ENCODE measurements at regions of chr19 and their contacts with region 1.

Region 1: GRCh38 chr19:4400135-4400936 is at the start of gene SH3GL1:
- DNase-seq: peak; percentile 87 to 98 (median 96)
- H3K4me3 ChIP-seq: peak within 1 kb of the TSS; percentile 78 to 94 (median 85)
- H3K27ac ChIP-seq: peak within 1 kb of the TSS; percentile 64 to 99 (median 89)
- H3K4me1 ChIP-seq: peaks cover 33 to 52% of the 10 kb centered on the region in 2 donors
- H3K27me3 ChIP-seq: no peaks in the 10 kb centered on the region
- CTCF ChIP-seq: peak; percentile 70 to 99 (median 94)
- POLR2A ChIP-seq: peak; percentile 86 to 88
- total RNA-seq, gene SH3GL1: 45.5 to 112 (median 83.8) TPM

Region 2: GRCh38 chr19:4342615-4343369 is 57.5 kb before region 1 on chr19:
- intact Hi-C with region 1: loop called in 1 of 2 experiments (anchors 10 kb)
- DNase-seq: peak; percentile 95 to 100 (median 99)
- H3K4me3 ChIP-seq: peak overlapping the region in 3 of 4 donors; percentile 21 to 99 (median 38)
- H3K27ac ChIP-seq: peak overlapping the region; percentile 57 to 93 (median 83)
- H3K4me1 ChIP-seq: peaks cover 12 to 25% of the 10 kb centered on the region in 2 donors
- H3K27me3 ChIP-seq: no peaks in the 10 kb centered on the region
- CTCF ChIP-seq: peak in 3 of 6 experiments; percentile 12 to 47 (median 34)
- POLR2A ChIP-seq: peak; percentile 90 to 98

Region 3: GRCh38 chr19:4362861-4363510 is 37.4 kb before region 1 on chr19:
- intact Hi-C with region 1: loop called in 1 of 2 experiments (anchors 5 kb)
- DNase-seq: peak in 3 of 7 donors; percentile 16 to 43 (median 33)
- H3K4me3 ChIP-seq: no peak overlapping the region
- H3K27ac ChIP-seq: peak overlapping the region in 2 of 5 donors; percentile 45 to 47
- H3K4me1 ChIP-seq: peaks cover 16 to 22% of the 10 kb centered on the region in 2 donors
- H3K27me3 ChIP-seq: no peaks in the 10 kb centered on the region
- CTCF ChIP-seq: peak in 2 of 6 experiments; percentile 9 to 20
- POLR2A ChIP-seq: no peak

Region 4: GRCh38 chr19:4457654-4458395 is 57.5 kb after region 1 on chr19 and contains the start of gene UBXN6:
- intact Hi-C with region 1: loop called in 1 of 2 experiments (anchors 10 kb)
- DNase-seq: peak; percentile 97 to 100 (median 99)
- H3K4me3 ChIP-seq: peak within 1 kb of the TSS in 3 of 4 donors; percentile 37 to 95 (median 80)
- H3K27ac ChIP-seq: peak within 1 kb of the TSS; percentile 77 to 95 (median 88)
- H3K4me1 ChIP-seq: peaks cover 33 to 40% of the 10 kb centered on the region in 2 donors
- H3K27me3 ChIP-seq: no peaks in the 10 kb centered on the region
- CTCF ChIP-seq: peak in 1 of 6 experiments; percentile 35
- POLR2A ChIP-seq: peak in 1 of 2 donors; percentile 58
- total RNA-seq, gene UBXN6: 113 to 317 (median 268) TPM

Region 5: GRCh38 chr19:4534836-4535658 is 134.7 kb after region 1 on chr19 and contains the start of gene PLIN5:
- intact Hi-C with region 1: no loop called
- DNase-seq: peak; percentile 83 to 95 (median 91)
- H3K4me3 ChIP-seq: peak within 1 kb of the TSS in 1 of 4 donors; percentile 40
- H3K27ac ChIP-seq: peak within 1 kb of the TSS in 2 of 5 donors; percentile 30 to 53
- H3K4me1 ChIP-seq: peaks cover 16 to 19% of the 10 kb centered on the region in 2 donors
- H3K27me3 ChIP-seq: no peaks in the 10 kb centered on the region
- CTCF ChIP-seq: no peak
- POLR2A ChIP-seq: no peak
- total RNA-seq, gene PLIN5: 1.5 to 47.6 (median 5.5) TPM

Measured in adrenal gland (tissue), 19 donors.